ENCODE measurements at regions of chr2 and their contacts with region 1.

Region 1: DNA sequence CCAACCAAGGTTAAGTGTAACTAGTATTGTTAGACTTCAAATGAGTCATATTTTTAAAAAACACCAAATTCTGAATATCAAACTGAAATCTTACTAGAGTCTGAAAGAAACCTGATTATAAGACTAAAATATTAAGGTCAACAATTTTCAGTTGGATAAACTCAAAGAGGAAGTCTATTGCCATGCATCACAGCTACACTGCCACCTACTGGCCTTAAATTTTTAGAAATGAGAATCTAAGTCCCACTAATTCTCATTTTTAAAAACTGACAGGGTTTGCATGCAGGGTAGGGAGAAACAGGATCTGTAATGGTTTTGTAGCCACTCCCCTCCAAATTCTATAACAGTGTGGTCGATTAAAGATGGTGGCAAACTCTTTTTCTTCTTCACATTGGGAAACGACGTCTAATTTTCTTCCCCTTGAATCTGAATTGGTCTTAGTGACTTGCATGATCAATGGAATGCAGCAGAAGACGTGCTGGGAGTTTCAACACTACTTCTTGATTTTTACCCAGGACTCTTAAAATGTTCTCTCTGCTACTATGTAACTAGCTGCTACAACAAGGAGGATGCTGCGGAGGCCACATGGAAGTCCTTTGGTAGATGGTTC is 176.1 kb upstream of the SESTD1 start:
- DNase-seq: peak; percentile 17
- H3K4me3 Mint-ChIP-seq: no peak overlapping the region
- H3K27ac Mint-ChIP-seq: no peak overlapping the region
- H3K4me1 Mint-ChIP-seq: no peaks in the 10 kb centered on the region
- H3K27me3 Mint-ChIP-seq: peaks cover 20% of the 10 kb centered on the region

Region 2: DNA sequence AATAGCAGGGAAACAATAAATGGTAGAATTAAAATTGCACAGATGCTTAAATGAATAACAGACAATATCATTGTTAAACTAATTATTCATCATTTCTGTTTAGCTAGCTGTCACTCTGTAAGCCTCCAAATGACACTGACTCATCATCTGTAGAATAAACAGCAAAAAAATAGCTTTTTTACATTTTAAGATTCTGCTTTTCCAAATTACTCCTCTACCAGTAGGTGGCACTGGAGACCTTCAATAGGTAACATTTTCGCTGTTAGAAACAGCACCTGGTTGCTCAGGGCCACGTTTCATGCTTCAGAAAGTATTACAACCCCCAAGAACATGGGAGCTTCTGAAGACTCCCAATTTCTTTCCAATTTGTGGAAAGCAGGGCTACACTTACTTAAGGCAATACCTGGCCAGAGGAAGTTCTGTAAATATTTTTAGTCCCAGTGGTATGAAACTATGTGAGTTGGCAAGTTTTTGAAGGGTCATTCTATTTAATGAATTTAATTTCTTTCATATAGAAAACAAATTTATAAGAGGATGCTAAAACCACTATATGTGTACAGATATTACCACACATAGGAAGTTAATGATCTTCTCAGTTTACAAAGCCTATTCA is 678.9 kb before region 1 on chr2:
- CTCF ChIA-PET with region 1: interaction called, 3 read pairs
- intact Hi-C with region 1: loop called (anchors 2 kb)
- DNase-seq: peak; percentile 51
- H3K4me3 Mint-ChIP-seq: no peak overlapping the region
- H3K27ac Mint-ChIP-seq: no peak overlapping the region
- H3K4me1 Mint-ChIP-seq: no peaks in the 10 kb centered on the region
- H3K27me3 Mint-ChIP-seq: no peaks in the 10 kb centered on the region

Region 3: DNA sequence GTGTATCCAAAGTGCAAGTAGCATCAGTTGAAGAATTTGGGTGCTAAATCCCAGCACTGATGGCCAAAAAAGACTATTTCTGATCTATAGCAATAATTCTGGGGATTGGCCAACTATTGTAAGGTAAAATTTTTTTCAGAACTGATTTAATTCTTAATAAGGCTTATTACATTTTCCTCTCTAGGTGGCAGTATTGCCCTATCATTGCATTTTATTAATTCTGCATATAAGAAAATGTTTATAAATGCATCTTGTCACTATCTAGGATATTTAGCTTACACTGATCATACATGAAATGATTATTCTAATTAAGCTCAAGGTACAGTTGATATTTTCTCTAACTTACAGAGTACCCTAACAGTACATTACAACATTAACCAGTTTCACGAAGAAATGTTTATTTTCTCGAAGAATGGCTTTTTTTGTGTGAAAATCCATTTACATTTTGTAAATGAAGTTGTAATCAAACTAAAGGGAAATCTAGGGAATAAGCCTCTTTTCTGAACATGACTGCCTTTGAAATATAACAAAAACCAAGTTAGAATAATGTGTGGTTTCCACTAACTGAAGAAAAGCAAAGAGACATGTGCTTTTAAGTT is 644.6 kb before region 1 on chr2:
- CTCF ChIA-PET with region 1: no interaction called
- intact Hi-C with region 1: loop called (anchors 1 kb)
- DNase-seq: no peak
- H3K4me3 Mint-ChIP-seq: no peak overlapping the region
- H3K27ac Mint-ChIP-seq: no peak overlapping the region
- H3K4me1 Mint-ChIP-seq: no peaks in the 10 kb centered on the region
- H3K27me3 Mint-ChIP-seq: no peaks in the 10 kb centered on the region

Region 4: GRCh38 chr2:178891265-178891958 is 549.3 kb before region 1 on chr2:
- CTCF ChIA-PET with region 1: no interaction called
- intact Hi-C with region 1: loop called (anchors 5 kb)
- DNase-seq: peak; percentile 82
- H3K4me3 Mint-ChIP-seq: no peak overlapping the region
- H3K27ac Mint-ChIP-seq: no peak overlapping the region
- H3K4me1 Mint-ChIP-seq: peaks cover 9% of the 10 kb centered on the region
- H3K27me3 Mint-ChIP-seq: no peaks in the 10 kb centered on the region

Region 5: DNA sequence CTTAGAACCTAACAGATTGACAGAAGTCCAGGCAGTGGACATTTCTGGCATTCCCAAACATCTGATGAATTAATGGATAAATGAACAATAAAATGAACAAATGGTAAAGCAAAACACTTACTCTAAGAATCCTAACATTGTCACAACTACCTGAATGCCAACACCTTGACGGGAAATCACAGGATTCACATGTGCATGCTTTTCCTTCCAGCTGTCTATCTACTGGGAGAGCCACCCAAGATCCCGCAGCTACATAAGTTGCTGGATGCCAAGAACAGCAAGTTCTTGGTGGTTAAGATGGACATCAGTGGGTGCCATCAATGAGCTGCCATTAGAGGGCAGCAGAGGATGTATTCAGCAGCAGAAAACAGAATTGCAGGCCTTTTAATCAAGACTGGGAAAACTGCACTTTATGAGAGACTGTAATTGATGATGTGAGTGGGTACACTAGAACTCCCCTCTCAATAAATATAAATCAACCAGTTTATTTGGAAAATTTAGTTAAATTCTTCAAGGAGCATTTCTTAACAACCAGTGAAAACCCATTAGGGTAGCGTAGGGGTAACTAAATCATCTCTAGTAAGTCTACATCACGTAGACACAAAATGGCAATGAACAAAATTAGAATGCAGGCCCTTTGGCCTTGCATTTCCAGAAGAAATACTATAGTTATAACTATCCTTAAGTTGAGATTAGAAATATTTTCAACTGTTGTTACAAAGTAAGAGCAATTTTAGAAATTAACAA is 221.7 kb before region 1 on chr2:
- CTCF ChIA-PET with region 1: interaction called, 3 read pairs
- intact Hi-C with region 1: loop called (anchors 1 kb)
- DNase-seq: peak; percentile 70
- H3K4me3 Mint-ChIP-seq: no peak overlapping the region
- H3K27ac Mint-ChIP-seq: no peak overlapping the region
- H3K4me1 Mint-ChIP-seq: no peaks in the 10 kb centered on the region
- H3K27me3 Mint-ChIP-seq: no peaks in the 10 kb centered on the region

Region 6: DNA sequence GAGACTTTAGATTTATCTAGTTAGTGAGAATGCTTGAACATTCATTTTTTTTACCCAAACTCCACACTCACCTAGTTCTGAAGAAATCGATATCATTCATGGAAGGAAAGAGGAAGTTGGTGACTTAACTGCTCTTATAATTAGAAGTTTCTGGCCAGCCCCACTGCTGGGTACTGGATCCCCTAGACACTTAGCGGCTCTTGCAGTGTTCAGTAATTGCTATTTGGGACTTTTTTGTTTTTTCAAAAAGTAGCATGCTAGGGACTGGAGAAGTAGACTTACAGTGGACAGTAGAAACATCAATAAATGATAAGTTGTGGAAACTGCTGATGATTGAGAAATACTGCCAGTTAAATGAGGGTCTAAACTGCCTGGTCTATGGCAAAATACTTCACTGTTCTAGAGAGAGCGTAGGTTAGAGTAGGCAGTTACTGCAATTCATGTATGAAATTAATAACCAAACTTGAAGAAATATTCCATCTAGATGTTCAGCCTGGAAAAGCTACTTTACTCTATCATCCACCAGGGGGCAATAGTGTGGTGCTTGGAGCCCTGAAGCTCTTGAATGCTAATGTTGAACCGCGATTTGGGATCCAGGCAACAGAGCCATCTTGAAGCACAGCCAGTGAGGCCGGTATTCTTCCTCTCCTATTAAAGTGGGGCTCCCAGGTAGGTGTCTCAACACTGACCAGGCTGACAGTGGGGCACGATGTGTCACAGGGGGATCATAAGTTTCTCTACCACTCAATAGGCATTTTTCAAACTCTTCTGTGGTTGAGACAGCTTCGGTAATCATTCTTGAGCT is 30.0 kb before region 1 on chr2:
- CTCF ChIA-PET with region 1: interaction called, 7 read pairs
- intact Hi-C with region 1: loop called (anchors 2 kb)
- DNase-seq: peak; percentile 45
- H3K4me3 Mint-ChIP-seq: no peak overlapping the region
- H3K27ac Mint-ChIP-seq: no peak overlapping the region
- H3K4me1 Mint-ChIP-seq: no peaks in the 10 kb centered on the region
- H3K27me3 Mint-ChIP-seq: peaks cover 32% of the 10 kb centered on the region

Region 7: GRCh38 chr2:179422037-179422643 is 18.6 kb before region 1 on chr2:
- CTCF ChIA-PET with region 1: interaction called, 26 read pairs
- intact Hi-C with region 1: no loop called
- DNase-seq: peak; percentile 72
- H3K4me3 Mint-ChIP-seq: no peak overlapping the region
- H3K27ac Mint-ChIP-seq: no peak overlapping the region
- H3K4me1 Mint-ChIP-seq: no peaks in the 10 kb centered on the region
- H3K27me3 Mint-ChIP-seq: peaks cover 8% of the 10 kb centered on the region

Region 8: GRCh38 chr2:179536185-179536584 is 95.4 kb after region 1 on chr2:
- CTCF ChIA-PET with region 1: no interaction called
- intact Hi-C with region 1: no loop called
- DNase-seq: no peak
- H3K4me3 Mint-ChIP-seq: no peak overlapping the region
- H3K27ac Mint-ChIP-seq: no peak overlapping the region
- H3K4me1 Mint-ChIP-seq: no peaks in the 10 kb centered on the region
- H3K27me3 Mint-ChIP-seq: peaks cover 2% of the 10 kb centered on the region

Measured in activated naive CD4-positive, alpha-beta T cell treated with anti-CD3 and anti-CD28 coated beads for 36 hours (primary cell).